MCF 10A (cell line): ENCODE measurements at regions of chr3 and their contacts with region 1.

Region 1: DNA sequence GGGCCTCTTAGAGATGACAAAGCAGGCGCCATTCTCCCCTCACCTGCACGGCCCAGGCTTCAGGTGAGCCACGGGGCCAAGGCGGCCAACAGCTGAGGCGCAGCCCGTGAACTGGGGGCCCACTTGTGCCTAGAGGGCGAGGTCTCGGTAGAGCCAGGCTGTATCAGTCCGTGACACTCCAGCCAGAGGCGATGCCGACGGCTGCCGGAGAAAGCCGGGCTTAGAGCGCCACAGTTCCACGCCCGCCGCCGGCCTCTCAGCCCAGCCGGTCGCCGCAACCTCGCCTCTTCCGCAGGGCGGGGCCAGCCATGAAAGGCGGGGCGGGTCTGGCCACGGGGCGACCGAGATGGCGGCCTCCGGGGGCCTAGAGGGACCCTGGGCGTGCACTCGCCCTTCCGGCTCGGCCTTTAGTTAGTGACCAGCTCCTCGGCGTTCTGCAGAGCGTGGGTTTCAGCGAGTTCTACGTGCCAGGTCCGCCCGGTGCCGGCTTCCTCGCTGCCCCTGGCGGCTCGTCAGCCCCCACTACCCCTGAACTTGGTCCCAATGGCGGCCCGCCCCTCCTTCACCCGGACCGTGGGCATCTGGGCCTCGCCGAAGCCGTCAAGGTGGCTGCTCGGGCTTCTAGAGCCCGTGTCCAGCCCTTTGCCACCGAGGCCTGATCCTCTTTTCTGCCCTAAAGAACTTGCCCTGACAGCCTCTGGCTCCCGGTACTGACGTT is at the start of gene ZNF621:
- DNase-seq: peak; percentile 88
- H3K4me3 Mint-ChIP-seq: peak within 1 kb of the TSS; percentile 90
- H3K27ac Mint-ChIP-seq: peak within 1 kb of the TSS; percentile 98
- H3K4me1 Mint-ChIP-seq: peaks cover 20% of the 10 kb centered on the region
- H3K27me3 Mint-ChIP-seq: no peaks in the 10 kb centered on the region
- CTCF ChIP-seq: no peak
- total RNA-seq, gene ZNF621: 39.6 and 44.5 TPM in 2 replicates

Region 2: GRCh38 chr3:40398346-40398745 is 126.4 kb before region 1 on chr3:
- CTCF ChIA-PET with region 1: no interaction called
- POLR2A ChIA-PET with region 1: no interaction called
- intact Hi-C with region 1: no loop called
- DNase-seq: no peak
- H3K4me3 Mint-ChIP-seq: no peak overlapping the region
- H3K27ac Mint-ChIP-seq: no peak overlapping the region
- H3K4me1 Mint-ChIP-seq: no peaks in the 10 kb centered on the region
- H3K27me3 Mint-ChIP-seq: no peaks in the 10 kb centered on the region
- CTCF ChIP-seq: no peak

Region 3: DNA sequence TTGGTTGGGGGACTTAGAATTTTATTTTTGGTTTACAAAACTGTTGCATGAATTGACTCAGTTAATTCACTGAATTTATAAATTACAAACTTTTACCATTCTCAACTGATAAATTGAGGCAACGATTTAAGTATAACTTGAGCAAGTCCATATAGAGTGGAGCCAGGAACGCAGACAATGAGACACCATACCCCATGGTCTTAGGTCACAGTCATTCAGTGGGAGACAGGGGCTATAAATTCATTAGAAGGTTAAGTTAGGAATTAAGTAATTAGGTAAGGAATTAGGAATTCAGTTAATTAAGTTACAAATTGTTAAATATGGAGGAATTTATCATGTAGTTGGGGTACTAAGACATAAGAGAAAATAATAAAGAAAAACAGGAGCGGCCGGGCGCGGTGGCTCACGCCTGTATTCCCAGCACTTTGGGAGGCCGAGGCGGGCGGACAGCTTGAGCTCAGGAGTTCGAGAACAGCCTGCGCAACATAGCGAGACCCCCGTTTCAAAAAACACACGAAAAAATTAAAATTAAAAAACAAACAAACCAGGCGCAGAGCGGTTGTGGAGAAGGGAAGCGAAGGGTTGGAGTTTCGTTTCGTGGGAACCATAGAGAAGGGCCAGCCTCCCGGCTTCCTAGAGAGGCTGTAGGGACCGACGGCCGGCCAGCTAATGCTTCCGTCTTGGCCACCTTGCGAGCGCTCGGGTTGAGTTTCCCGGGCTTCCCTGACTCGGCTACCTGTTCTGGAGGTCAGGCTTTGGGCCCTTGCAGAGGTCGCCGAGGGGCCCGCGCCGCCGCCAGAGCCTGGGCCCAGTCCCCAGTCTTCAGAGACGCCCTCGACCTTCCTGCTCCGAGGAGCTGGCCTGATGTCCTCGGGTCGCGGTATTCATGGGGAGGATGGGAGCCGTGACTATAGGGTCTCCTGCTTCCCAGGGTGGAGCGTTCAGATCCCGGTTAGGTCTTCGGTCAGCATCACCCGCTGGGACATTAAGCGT is 48.0 kb before region 1 on chr3 and contains the start of gene ZNF619:
- CTCF ChIA-PET with region 1: interaction called, 7 read pairs
- POLR2A ChIA-PET with region 1: interaction called, 30 read pairs
- intact Hi-C with region 1: loop called (anchors 1 kb)
- DNase-seq: peak; percentile 80
- H3K4me3 Mint-ChIP-seq: peak within 1 kb of the TSS; percentile 90
- H3K27ac Mint-ChIP-seq: peak within 1 kb of the TSS; percentile 99
- H3K4me1 Mint-ChIP-seq: peaks cover 11% of the 10 kb centered on the region
- H3K27me3 Mint-ChIP-seq: no peaks in the 10 kb centered on the region
- CTCF ChIP-seq: no peak
- total RNA-seq, gene ZNF619: 8.3 and 8.7 TPM in 2 replicates

Region 4: DNA sequence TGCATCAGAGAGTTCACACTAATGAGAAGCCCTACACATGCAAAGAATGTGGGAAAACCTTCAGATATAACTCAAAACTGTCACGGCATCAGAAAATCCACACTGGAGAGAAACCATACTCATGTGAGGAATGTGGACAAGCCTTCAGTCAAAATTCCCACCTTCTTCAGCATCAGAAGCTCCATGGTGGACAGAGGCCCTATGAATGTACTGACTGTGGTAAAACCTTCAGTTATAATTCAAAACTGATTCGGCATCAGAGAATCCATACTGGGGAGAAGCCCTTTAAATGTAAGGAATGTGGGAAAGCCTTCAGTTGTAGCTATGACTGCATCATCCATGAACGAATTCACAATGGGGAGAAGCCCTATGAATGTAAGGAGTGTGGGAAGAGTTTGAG is 37.6 kb before region 1 on chr3:
- CTCF ChIA-PET with region 1: no interaction called
- POLR2A ChIA-PET with region 1: no interaction called
- intact Hi-C with region 1: no loop called
- DNase-seq: no peak
- H3K4me3 Mint-ChIP-seq: no peak overlapping the region
- H3K27ac Mint-ChIP-seq: no peak overlapping the region
- H3K4me1 Mint-ChIP-seq: no peaks in the 10 kb centered on the region
- H3K27me3 Mint-ChIP-seq: no peaks in the 10 kb centered on the region
- CTCF ChIP-seq: no peak

Region 5: DNA sequence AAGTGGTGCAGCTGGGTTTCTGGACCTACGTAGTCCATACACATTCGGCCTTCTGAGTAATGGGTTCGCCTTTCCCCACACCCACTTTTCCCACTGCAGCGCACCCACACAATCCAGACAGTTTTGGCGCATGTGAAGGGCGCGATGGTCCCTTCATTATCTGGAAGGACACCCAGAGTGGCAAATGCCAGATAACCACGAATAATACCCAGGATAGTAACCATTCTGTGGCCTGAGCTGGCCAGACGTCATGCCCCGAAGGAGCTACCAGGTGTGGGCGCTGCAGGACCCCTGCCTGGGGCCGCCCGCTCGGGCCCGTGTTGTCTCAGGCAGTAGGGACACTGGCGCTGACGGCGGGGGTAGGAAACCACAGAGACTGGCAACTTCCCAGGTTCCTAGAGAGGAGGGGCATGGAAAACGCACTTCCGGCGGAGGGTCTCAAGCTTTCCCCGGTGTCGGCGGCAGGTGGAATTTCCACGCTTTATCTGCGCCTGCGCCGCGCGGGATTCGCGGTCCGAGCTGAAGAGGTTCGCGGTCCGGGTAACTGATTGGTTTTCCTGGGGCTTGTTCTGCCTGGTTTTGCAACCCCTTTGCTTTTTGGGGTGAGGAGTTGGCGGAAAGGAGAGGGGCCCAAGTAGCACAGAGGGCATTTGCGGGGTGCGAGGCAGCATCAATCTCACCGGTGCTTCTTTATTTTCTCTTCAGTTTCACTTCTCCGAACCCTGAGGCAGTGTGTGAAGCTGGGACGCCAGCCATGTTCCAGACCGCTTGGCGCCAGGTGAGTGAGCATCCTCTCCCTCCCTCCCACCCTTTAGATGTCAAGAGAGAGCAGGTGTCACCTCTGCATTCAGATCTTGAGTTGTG is 18.9 kb before region 1 on chr3 and contains the start of gene ZNF620:
- CTCF ChIA-PET with region 1: interaction called, 5 read pairs
- POLR2A ChIA-PET with region 1: interaction called, 32 read pairs
- intact Hi-C with region 1: loop called (anchors 2 kb)
- DNase-seq: peak; percentile 48
- H3K4me3 Mint-ChIP-seq: peak within 1 kb of the TSS; percentile 77
- H3K27ac Mint-ChIP-seq: peak within 1 kb of the TSS; percentile 70
- H3K4me1 Mint-ChIP-seq: peaks cover 13% of the 10 kb centered on the region
- H3K27me3 Mint-ChIP-seq: no peaks in the 10 kb centered on the region
- CTCF ChIP-seq: no peak
- total RNA-seq, gene ZNF620: 2.8 and 2.9 TPM in 2 replicates